Mammary epithelial cell (primary cell): ENCODE measurements at regions of chr3 and their contacts with region 1.

Region 1: DNA sequence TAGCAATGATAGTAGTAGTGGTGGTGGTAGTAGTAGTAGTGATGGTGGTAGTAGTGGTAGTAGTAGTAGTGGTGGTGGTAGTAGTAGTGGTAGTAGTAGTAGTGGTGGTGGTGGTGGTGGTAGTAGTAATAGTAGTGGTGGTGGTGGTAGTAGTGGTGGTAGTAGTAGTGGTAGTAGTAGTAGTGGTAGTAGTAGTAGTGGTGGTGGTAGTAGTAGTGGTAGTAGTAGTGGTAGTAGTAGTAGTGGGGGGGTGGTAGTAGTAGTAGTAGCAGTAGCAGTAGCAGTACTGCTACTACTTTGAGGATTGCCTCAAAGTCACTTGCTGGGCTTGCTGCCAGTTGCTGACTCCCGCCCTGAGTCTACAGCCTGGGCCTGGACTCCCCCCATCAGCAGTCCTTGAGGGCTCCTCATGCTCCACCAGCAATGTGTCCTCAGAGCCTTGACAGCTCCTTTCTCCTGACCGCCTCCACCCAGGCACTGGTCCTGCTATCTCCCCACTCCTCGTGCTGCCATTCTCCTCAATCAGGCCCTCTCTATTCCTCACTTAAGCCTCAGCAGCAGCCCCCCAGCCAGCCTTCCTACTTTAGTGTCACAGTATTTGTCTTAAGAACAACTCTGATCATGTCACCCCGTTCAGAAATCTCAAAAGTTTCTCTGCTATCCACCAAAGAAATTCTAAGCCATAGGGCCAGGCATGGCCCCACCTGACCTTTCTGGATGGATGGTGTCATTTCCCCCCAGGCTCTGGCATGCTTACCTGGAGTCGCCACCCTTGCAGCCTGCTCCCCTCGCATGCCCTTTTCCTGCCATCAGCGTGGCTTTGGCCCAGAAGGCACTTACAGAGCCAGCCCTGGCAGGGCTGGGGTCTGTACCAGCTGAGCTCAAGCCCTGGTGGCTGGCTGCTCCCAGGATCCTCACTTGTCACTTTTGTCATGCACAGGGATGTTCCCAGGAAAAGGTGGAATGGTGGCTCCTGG is 45.6 kb downstream of the DLEC1 start:
- DNase-seq: no peak
- H3K4me3 ChIP-seq: no peak overlapping the region
- H3K27ac ChIP-seq: no peak overlapping the region
- H3K4me1 ChIP-seq: no peaks in the 10 kb centered on the region
- H3K27me3 ChIP-seq: no peaks in the 10 kb centered on the region
- CTCF ChIP-seq: no peak

Region 2: GRCh38 chr3:37631686-37632085 is 452.9 kb before region 1 on chr3:
- CTCF ChIA-PET with region 1: no interaction called
- dilution Hi-C with region 1: no loop called
- in situ Hi-C with region 1: no loop called
- intact Hi-C with region 1: no loop called
- DNase-seq: no peak
- H3K4me3 ChIP-seq: no peak overlapping the region
- H3K27ac ChIP-seq: no peak overlapping the region
- H3K4me1 ChIP-seq: no peaks in the 10 kb centered on the region
- H3K27me3 ChIP-seq: no peaks in the 10 kb centered on the region
- CTCF ChIP-seq: no peak

Region 3: DNA sequence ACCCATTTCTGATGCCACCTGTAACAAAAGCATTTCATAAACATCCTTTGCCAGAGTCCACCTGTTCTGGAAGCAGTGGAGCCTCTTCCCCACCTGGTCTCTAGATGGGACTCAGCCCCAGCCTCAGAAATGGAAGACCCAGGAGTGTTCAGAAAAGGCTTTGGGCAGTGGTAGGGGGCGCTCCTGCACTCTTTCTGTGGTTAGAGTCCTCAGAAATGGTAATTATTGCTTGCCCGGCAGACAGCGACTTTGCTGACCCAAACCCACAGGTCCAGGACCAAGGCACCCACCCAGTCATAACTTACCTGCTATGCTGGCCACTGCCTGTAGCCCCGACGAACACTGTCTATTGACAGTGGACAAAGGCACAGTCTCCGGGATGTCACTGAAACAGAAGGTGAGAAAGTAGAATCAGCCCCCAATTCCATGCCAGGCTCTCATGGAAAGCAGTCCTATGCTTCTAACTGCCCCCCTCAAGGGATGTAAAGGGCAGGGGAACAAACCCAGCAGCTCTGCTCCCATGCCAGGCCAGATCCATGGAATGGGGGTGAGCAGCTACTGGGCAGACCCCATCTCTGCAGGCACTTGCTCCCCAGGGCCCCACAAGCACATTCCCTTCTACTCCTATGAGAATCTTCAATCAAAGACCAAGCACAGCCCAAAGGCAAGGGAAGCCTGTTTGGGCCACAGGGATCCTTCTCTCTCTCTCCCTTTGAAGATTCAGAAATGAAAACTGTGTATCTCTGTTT is 47.2 kb after region 1 on chr3:
- CTCF ChIA-PET with region 1: no interaction called
- dilution Hi-C with region 1: loop called (anchors 5 kb)
- in situ Hi-C with region 1: no loop called
- intact Hi-C with region 1: no loop called
- DNase-seq: no peak
- H3K4me3 ChIP-seq: no peak overlapping the region
- H3K27ac ChIP-seq: no peak overlapping the region
- H3K4me1 ChIP-seq: peaks cover 15% of the 10 kb centered on the region
- H3K27me3 ChIP-seq: no peaks in the 10 kb centered on the region
- CTCF ChIP-seq: peak in 1 of 2 donors; percentile 51